ENCODE measurements at regions of chr1 and their contacts with region 1.

Region 1: DNA sequence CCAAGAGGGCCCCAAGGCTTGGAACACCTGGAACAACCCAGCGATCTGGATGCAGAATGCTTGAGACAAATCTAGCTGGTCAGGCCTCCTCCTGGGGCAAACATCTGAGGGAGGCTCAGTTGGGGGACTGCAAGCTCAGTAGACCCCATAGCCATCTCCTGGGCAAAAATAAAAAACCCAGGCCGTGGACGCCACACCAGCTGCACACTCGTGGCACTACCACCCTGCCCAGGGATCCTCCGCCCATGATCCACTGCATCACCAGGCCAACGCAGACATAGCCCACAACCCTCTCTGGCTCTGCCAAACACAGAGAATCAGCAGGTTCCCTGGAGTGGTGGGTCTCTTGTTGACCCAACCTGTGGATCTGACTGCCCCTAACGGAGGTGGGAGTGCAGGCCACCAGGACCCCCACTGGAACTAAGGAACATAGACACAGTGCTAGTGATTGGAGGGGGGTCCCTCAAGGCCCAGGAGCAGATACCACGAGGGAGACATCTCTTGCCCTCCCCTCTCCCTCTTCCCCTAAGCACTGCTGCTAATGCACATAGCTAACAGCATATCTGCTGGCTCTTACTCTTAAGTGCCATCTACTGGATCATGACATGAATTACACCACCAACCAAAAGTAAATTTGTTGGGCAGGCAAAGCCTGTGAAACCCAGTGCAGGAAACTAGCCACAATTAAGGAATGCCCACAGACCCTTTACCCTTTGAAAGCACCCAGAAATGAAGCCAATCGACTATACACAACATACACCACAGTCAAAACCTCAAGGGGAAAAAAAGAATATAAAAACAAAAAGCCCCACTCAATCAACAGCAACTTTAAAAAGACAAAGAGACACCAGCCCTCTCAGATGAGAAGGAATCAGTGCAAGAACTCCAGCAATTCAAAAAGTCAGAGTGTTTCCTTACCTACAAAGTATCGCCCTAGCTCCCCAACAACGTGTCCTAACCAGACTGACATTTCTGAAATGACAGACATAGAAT is 147.3 kb downstream of the CHD1L start:
- DNase-seq: no peak
- ATAC-seq: peak; percentile 49
- H3K4me3 Mint-ChIP-seq: no peak overlapping the region
- H3K27ac Mint-ChIP-seq: no peak overlapping the region
- H3K4me1 Mint-ChIP-seq: peaks cover 1% of the 10 kb centered on the region
- H3K27me3 Mint-ChIP-seq: peaks cover 6% of the 10 kb centered on the region

Region 2: DNA sequence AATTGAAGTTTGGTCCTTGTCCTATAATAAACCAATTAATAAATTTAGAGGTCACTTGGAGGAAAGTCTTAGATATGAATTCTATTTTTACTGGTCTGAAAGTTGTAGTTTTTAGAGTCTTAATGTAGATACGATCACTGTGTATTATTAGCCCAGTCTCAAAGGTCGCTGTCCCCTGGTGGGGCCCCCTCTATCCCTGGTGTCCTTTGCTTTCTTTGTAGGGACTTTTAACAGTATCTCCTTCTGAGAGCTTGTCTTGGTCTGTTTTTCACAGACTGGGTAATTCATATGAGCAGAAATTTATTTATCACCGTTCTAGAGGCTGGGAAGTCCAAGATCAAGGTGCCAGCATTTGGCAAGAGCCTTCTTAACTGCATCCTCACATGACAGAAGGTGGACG is 128.9 kb before region 1 on chr1:
- CTCF ChIA-PET with region 1: no interaction called
- POLR2A ChIA-PET with region 1: no interaction called
- intact Hi-C with region 1: no loop called
- DNase-seq: no peak
- ATAC-seq: no peak
- H3K4me3 Mint-ChIP-seq: no peak overlapping the region
- H3K27ac Mint-ChIP-seq: no peak overlapping the region
- H3K4me1 Mint-ChIP-seq: no peaks in the 10 kb centered on the region
- H3K27me3 Mint-ChIP-seq: no peaks in the 10 kb centered on the region

Region 3: GRCh38 chr1:147273409-147274336 is 116.2 kb before region 1 on chr1:
- CTCF ChIA-PET with region 1: interaction called, 62 read pairs
- POLR2A ChIA-PET with region 1: no interaction called
- intact Hi-C with region 1: loop called (anchors 1 kb)
- DNase-seq: peak; percentile 37
- ATAC-seq: peak; percentile 47
- H3K4me3 Mint-ChIP-seq: no peak overlapping the region
- H3K27ac Mint-ChIP-seq: no peak overlapping the region
- H3K4me1 Mint-ChIP-seq: peaks cover 6% of the 10 kb centered on the region
- H3K27me3 Mint-ChIP-seq: no peaks in the 10 kb centered on the region

Region 4: DNA sequence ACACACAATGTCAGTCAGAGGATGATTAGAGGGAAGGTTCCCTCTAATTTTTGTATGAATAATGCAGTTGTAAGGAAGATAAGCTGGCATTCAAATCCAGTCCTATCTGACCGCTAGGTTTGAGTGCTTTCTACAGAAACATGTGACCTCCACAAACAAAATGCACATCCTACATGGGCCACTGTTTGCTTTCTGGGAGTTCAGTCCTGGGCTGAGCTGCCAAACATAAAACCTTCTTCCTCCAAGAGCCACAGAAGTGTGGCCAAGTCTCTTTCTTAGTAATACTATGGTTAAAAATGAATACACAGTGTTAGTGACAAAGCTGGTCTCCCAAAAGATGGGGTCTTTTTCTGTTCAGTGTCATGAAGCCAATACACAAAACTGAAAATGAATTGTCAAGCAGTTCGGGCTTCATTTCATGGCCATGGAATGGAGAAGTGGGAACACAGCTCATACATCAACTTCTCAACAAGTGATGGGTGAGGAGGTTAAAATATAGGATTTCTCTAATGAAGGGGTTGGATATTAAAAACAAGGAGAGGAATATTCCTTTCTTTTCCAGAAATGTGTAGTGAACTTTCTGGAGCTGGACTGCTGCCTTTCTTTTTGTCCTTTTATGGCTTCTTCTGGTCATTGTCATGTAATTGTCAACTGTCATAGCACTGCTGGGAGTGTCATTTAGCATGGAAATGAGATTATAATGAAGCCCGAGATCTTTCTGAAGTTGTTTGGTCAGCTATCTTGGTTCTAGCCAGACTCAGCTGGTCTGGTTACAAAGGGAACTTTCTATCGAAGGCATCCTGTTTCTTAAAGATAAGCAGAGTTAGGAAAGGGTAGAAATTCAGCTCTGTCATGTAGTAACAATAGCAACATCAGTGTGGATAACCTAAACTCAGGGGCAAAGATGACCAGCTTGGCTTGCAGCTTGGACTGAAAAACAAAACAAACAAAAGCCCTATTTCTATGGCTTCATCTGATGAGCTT is 12.3 kb before region 1 on chr1:
- CTCF ChIA-PET with region 1: interaction called, 14 read pairs
- POLR2A ChIA-PET with region 1: no interaction called
- intact Hi-C with region 1: no loop called
- DNase-seq: no peak
- ATAC-seq: no peak
- H3K4me3 Mint-ChIP-seq: no peak overlapping the region
- H3K27ac Mint-ChIP-seq: no peak overlapping the region
- H3K4me1 Mint-ChIP-seq: no peaks in the 10 kb centered on the region
- H3K27me3 Mint-ChIP-seq: peaks cover 10% of the 10 kb centered on the region

Region 5: GRCh38 chr1:147463022-147463421 is 73.2 kb after region 1 on chr1:
- CTCF ChIA-PET with region 1: no interaction called
- POLR2A ChIA-PET with region 1: no interaction called
- intact Hi-C with region 1: no loop called
- DNase-seq: no peak
- ATAC-seq: no peak
- H3K4me3 Mint-ChIP-seq: no peak overlapping the region
- H3K27ac Mint-ChIP-seq: no peak overlapping the region
- H3K4me1 Mint-ChIP-seq: no peaks in the 10 kb centered on the region
- H3K27me3 Mint-ChIP-seq: peaks cover 57% of the 10 kb centered on the region

Measured in activated CD4-positive, alpha-beta T cell treated with anti-CD3 and anti-CD28 coated beads for 36 hours (primary cell).